H1 (cell line): ENCODE measurements at regions of chr9 and their contacts with region 1.

Region 1: DNA sequence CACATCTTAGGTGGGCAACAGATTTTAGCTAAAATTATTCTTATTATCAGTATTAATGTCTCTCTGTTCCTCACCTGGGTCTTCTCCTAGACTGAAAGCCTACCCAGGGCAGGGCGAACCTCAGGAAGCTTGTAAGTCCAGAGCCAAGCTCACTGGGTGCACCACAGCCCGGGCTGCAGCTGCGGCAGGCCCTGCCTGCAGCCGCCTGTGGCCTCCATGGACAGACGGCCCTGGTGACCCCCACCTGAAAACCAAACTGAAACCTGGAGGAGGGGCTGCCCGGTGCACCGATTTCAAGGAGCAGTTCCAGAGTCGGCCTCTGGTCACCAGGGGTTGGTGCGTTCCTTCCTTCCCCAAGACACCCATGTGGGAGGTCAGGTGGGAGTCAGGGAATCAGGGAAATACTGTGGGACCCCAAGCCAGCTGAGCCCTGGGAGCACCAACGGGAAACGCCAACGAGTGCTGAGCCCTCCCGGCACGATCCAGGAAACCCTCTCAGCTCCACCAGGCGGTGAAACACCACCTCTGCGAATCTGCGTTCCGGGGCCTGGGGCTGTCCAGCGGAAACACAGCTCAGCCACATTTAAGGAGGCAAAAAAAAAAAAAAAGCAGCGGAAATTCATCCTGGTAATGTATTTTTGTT is 68.6 kb upstream of the PPP1R26 start:
- DNase-seq: peak in 1 of 2 experiments; percentile 56
- H3K4me3 ChIP-seq: no peak overlapping the region
- H3K27ac ChIP-seq: no peak overlapping the region
- H3K4me1 ChIP-seq: no peaks in the 10 kb centered on the region
- H3K27me3 ChIP-seq: no peaks in the 10 kb centered on the region; a peak in 2 of 7 replicates
- CTCF ChIP-seq: peak in 2 of 3 experiments; percentile 16 to 29; a peak in 2 of 4 replicates
- EP300 ChIP-seq: no peak
- POLR2A ChIP-seq: no peak
- RAD21 ChIP-seq: peak in 1 of 2 experiments; percentile 35; a peak in 3 of 4 replicates

Region 2: DNA sequence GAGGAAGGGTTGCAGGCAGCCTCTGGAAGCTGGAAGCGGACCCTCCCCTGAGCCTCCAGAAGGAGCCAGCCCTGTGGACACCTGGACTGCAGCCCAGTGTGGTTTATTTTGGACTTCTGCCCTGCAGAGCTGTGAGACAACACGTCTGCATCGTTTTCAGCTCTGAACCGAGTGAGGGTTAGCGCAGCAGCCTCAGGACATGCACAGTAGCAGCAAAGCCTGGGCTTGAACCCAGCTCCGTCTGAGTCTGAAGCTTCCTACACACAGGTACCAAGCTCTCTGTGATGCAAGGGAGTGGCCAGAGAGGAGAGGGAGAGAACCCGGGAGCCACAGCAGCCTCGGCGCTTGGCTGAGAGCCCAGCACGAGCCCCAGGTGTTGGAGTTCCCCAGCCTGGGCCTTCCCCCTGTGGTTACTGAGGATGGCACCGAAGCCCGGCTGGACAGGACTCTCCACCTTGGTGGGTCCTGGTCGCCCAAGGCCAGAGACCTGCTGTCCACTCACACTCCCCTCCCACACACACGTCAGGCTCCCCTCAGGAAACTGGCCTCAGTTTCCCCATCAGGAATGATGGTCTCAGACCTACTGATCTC is 195.3 kb before region 1 on chr9:
- CTCF ChIA-PET with region 1: interaction called, 14 read pairs
- POLR2A ChIA-PET with region 1: no interaction called
- DNase-seq: no peak
- H3K4me3 ChIP-seq: no peak overlapping the region
- H3K27ac ChIP-seq: no peak overlapping the region
- H3K4me1 ChIP-seq: peaks cover 16 to 27% (median 20%) of the 10 kb centered on the region in 4 experiments
- H3K27me3 ChIP-seq: no peaks in the 10 kb centered on the region
- CTCF ChIP-seq: no peak
- EP300 ChIP-seq: no peak
- POLR2A ChIP-seq: no peak
- RAD21 ChIP-seq: no peak

Region 3: DNA sequence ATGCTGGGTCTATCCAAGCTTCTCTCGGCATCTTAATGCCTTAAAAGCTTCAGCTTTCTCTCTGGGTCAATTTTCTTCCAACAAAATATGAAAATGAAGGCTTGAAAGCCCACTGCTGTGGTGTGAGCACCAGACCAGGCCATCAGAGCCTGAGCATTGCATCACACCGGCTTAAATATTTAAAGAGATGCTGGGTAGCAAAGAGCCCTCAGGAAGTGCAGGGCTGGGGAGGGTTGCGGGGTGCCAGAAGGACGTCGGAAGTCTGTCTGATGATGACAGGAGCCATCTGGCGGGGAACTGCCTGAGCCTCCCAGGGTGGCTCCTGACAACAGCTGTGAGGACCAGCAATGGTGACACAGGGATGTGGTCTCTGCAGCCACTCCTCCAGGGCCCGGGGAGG is 137.9 kb before region 1 on chr9:
- CTCF ChIA-PET with region 1: interaction called, 16 read pairs
- POLR2A ChIA-PET with region 1: no interaction called
- DNase-seq: no peak
- H3K4me3 ChIP-seq: no peak overlapping the region
- H3K27ac ChIP-seq: no peak overlapping the region
- H3K4me1 ChIP-seq: no peaks in the 10 kb centered on the region
- H3K27me3 ChIP-seq: no peaks in the 10 kb centered on the region; a peak in 1 of 7 replicates
- CTCF ChIP-seq: no peak
- EP300 ChIP-seq: no peak
- POLR2A ChIP-seq: no peak
- RAD21 ChIP-seq: no peak

Region 4: DNA sequence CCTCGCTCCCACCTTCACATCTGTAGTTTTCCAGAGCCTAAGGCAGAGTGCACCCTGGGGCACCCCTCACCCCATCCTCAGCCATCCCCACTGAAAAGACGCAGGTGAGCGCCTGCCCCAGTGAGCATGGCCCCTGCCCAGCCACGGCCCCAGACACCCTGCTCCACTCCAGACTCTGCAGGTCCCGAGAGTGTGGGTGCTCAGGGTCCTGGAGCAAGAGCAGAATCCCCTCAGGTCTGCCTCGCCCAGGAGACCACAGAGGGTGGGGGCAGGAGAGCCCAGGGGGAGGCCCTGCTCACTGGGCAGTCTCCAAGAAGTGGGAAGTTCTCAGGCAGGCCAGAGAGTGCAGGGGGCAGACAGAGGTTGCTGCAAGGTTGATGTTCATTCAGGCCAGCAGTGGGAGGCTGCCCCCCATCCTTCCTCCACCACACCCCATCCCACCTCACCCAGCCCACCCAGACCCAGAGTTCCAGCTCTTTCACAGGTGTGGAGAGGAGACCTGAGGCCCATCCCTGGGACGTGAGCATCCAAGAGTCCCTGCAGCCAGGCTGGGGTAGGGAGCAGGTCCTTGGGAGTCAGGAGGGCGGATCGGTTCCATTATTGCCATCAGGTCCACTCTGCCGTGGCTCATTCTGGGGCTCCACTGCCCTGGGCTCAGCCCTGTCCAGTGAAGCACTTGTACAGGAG is 89.9 kb before region 1 on chr9:
- CTCF ChIA-PET with region 1: no interaction called
- POLR2A ChIA-PET with region 1: no interaction called
- DNase-seq: no peak
- H3K4me3 ChIP-seq: no peak overlapping the region
- H3K27ac ChIP-seq: no peak overlapping the region
- H3K4me1 ChIP-seq: peaks cover 1 to 14% (median 6%) of the 10 kb centered on the region in 4 experiments; a peak in 4 of 7 replicates
- H3K27me3 ChIP-seq: no peaks in the 10 kb centered on the region
- CTCF ChIP-seq: no peak
- EP300 ChIP-seq: no peak
- POLR2A ChIP-seq: no peak
- RAD21 ChIP-seq: no peak

Region 5: DNA sequence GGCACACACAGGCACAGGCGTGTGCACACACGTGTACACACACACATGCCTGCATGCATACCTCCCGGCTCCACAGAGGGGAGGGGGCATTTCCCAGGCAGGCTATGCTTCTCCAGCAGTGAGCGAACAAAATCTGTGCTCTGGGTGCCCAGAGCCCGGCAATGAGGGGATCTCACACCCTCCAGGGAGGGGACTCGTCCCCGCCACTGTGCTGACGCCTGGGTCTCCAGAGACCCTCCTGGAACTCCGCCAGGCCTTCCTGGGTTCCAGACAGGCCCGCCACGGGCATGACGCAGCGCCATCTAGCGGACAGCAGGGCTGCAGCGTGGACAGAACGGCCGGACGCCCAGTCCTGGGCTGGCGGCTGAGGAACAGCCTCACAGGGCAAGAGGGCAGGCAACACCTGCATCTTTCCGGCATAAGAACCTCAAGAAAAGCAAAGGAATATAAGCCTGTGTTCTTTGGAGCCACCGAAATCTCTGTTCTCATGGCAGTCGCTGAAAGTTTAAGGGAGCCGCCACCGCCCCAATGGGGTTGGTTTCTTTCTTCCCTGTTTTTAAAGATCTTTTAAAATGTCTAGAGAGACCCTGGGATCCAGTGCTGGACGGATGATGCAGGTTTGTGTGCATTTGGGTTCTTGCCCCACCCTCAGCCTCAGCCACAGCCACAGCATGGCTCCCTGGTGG is 67.0 kb before region 1 on chr9:
- CTCF ChIA-PET with region 1: interaction called, 74 read pairs
- POLR2A ChIA-PET with region 1: no interaction called
- DNase-seq: peak; percentile 39 to 96
- H3K4me3 ChIP-seq: no peak overlapping the region
- H3K27ac ChIP-seq: no peak overlapping the region
- H3K4me1 ChIP-seq: peaks cover 2 to 29% (median 20%) of the 10 kb centered on the region in 4 experiments
- H3K27me3 ChIP-seq: no peaks in the 10 kb centered on the region
- CTCF ChIP-seq: peak in 2 of 3 experiments; percentile 98; a peak in 3 of 4 replicates
- EP300 ChIP-seq: no peak
- POLR2A ChIP-seq: no peak
- RAD21 ChIP-seq: peak; percentile 94 to 98

Region 6: GRCh38 chr9:135440620-135441019 is 29.7 kb after region 1 on chr9:
- CTCF ChIA-PET with region 1: interaction called, 12 read pairs
- POLR2A ChIA-PET with region 1: no interaction called
- DNase-seq: no peak
- H3K4me3 ChIP-seq: no peak overlapping the region
- H3K27ac ChIP-seq: no peak overlapping the region
- H3K4me1 ChIP-seq: no peaks in the 10 kb centered on the region; a peak in 1 of 7 replicates
- H3K27me3 ChIP-seq: no peaks in the 10 kb centered on the region
- CTCF ChIP-seq: no peak
- EP300 ChIP-seq: no peak
- POLR2A ChIP-seq: no peak
- RAD21 ChIP-seq: no peak

Region 7: DNA sequence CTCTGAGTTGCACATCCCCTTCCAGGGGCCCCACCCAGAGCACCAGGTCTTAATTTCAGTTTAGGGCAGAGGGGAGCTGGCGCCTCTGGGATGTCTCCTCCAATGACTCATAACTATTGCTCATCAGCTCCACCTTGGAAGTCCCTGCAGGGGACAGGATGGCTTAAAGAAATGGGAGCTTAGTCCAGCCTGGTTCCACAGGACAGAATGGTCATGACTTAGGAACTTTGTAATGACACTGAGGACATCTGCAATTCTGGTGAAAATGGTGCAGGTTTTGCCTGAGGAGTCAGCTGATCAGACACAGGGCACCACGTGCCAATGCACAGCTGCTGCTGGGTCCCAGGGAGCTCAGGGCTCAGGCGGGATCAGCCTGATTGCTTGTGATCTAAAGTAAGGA is 52.2 kb after region 1 on chr9:
- CTCF ChIA-PET with region 1: no interaction called
- POLR2A ChIA-PET with region 1: no interaction called
- DNase-seq: no peak
- H3K4me3 ChIP-seq: no peak overlapping the region
- H3K27ac ChIP-seq: no peak overlapping the region
- H3K4me1 ChIP-seq: no peaks in the 10 kb centered on the region
- H3K27me3 ChIP-seq: no peaks in the 10 kb centered on the region
- CTCF ChIP-seq: no peak
- EP300 ChIP-seq: no peak
- POLR2A ChIP-seq: no peak
- RAD21 ChIP-seq: no peak